Activated CD8-positive, alpha-beta T cell treated with anti-CD3 and anti-CD28 coated beads for 36 hours (primary cell): ENCODE measurements at regions of chr5 and their contacts with region 1.

Region 1: DNA sequence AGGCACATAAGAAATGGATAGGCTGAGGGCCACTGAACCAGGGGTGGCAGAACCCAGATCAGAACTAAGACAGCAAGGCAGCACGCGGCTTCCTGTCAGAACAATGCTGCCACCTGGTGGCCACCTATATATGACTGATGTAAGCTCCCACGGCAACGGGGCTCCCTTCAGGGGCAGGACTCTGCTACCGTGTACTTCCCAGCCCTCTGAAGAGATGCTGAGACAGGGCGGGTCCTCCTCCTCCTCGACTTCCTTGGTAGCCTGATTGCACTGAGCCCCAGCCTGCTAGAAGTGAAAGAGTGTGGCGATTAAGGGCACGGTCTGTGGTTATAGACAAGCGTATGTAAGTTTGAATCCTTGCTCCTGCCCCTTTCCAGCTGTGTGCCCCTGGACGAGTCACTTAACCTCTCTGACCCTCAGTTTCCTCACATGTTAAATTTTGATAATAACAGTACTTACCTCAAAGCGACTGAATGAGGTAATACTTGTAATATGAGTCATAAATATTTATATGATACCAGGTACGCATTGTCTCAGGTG is 13.3 kb downstream of the RPS14 start:
- DNase-seq: peak; percentile 98
- ATAC-seq: peak; percentile 96
- H3K4me3 Mint-ChIP-seq: no peak overlapping the region
- H3K27ac Mint-ChIP-seq: peak overlapping the region; percentile 67
- H3K4me1 Mint-ChIP-seq: peaks cover 10% of the 10 kb centered on the region
- H3K27me3 Mint-ChIP-seq: no peaks in the 10 kb centered on the region
- CTCF ChIP-seq: peak; percentile 72

Region 2: DNA sequence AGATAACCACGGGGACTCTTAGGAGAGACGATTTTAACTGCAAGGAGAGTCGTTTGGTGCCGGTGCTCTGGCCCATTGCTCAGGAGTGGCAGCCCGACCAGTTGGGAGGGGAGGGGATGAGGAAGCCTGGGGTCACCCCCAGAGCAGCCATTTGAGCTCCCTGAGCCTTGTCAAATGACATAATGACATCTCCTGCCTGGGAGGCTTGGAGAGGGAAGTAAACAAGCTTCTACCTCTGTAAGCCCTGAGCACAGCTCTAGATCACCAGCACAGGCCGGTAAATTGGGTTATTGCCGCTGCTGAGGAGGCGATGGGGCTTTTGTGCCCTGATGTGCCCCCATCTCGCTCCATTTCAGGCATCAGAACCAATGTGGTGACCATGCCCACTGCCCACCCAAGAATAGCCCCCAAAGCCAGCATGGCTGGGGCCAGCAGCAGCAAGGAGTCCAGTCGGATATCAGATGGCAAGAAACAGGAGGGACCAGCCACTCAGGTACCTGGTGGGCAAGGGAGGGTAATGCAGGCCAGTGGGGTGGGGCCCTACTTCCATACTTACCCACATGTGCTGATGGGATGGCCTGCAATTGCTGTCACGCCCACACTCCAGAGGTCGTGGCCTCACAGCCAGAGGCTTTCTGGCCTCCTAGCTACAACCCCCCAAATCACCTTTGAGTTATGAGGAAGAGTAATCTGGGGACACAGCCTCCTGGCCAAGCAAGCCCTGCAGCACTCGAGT is 46.5 kb before region 1 on chr5:
- CTCF ChIA-PET with region 1: no interaction called
- POLR2A ChIA-PET with region 1: no interaction called
- intact Hi-C with region 1: no loop called
- DNase-seq: no peak
- ATAC-seq: no peak
- H3K4me3 Mint-ChIP-seq: no peak overlapping the region
- H3K27ac Mint-ChIP-seq: no peak overlapping the region
- H3K4me1 Mint-ChIP-seq: no peaks in the 10 kb centered on the region
- H3K27me3 Mint-ChIP-seq: no peaks in the 10 kb centered on the region
- CTCF ChIP-seq: no peak

Region 3: GRCh38 chr5:150409638-150410523 is 26.3 kb before region 1 on chr5:
- CTCF ChIA-PET with region 1: interaction called, 15 read pairs
- POLR2A ChIA-PET with region 1: interaction called, 11 read pairs
- intact Hi-C with region 1: no loop called
- DNase-seq: peak; percentile 55
- ATAC-seq: no peak
- H3K4me3 Mint-ChIP-seq: peak overlapping the region; percentile 97
- H3K27ac Mint-ChIP-seq: peak overlapping the region; percentile 99
- H3K4me1 Mint-ChIP-seq: peaks cover 39% of the 10 kb centered on the region
- H3K27me3 Mint-ChIP-seq: no peaks in the 10 kb centered on the region
- CTCF ChIP-seq: no peak

Region 4: GRCh38 chr5:150419630-150420270 is 16.5 kb before region 1 on chr5:
- CTCF ChIA-PET with region 1: interaction called, 15 read pairs
- POLR2A ChIA-PET with region 1: interaction called, 4 read pairs
- intact Hi-C with region 1: no loop called
- DNase-seq: no peak
- ATAC-seq: peak; percentile 10
- H3K4me3 Mint-ChIP-seq: no peak overlapping the region
- H3K27ac Mint-ChIP-seq: no peak overlapping the region
- H3K4me1 Mint-ChIP-seq: peaks cover 6% of the 10 kb centered on the region
- H3K27me3 Mint-ChIP-seq: no peaks in the 10 kb centered on the region
- CTCF ChIP-seq: no peak

Region 5: DNA sequence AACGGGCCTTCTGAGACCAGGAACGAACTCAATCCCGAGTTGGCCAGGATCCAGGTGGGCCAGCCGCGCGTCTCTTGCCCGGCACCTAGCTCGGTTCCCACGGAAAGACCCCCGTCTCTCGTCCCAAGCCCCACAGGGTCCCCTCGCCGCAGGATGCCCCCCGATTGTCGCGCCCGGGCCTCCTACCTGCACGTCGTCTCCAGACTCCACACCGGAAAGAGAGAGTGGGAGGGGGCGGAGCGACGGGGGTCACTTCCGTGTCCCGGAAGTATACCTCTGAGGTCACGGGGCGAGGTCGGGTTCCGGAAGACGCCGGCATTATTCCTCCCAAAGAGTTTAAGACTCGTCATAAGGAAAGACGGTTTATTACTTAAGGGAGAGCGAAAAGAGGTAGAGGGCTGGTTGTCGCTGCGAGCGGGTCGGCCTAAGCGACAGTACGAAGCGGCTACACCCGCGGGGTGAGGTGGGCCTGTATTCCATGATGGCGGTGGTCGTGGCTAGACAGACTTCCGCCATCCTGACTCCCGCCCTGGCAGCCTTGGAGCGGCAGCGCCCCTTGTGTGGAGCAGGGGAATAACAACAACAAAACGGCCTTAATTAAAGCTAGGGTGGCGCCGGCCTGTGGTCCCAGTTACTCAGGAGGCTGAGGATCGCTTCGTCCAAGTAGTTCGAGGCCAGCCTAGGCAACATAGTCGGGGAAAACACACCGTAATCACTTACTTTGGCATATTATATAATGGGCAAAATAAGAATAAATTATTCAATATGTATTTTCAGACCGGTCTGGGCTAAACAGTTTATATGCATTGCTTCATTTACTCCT is 13.5 kb after region 1 on chr5 and contains the start of gene RPS14:
- CTCF ChIA-PET with region 1: interaction called, 10 read pairs
- POLR2A ChIA-PET with region 1: interaction called, 21 read pairs
- intact Hi-C with region 1: no loop called
- DNase-seq: peak; percentile 97
- ATAC-seq: peak; percentile 94
- H3K4me3 Mint-ChIP-seq: peak within 1 kb of the TSS; percentile 92
- H3K27ac Mint-ChIP-seq: peak within 1 kb of the TSS; percentile 100
- H3K4me1 Mint-ChIP-seq: peaks cover 30% of the 10 kb centered on the region
- H3K27me3 Mint-ChIP-seq: no peaks in the 10 kb centered on the region
- CTCF ChIP-seq: peak; percentile 89
- total RNA-seq, gene RPS14: 3,542 to 3,651 TPM